ENCODE measurements at regions of chr19 and their contacts with region 1.

Region 1: DNA sequence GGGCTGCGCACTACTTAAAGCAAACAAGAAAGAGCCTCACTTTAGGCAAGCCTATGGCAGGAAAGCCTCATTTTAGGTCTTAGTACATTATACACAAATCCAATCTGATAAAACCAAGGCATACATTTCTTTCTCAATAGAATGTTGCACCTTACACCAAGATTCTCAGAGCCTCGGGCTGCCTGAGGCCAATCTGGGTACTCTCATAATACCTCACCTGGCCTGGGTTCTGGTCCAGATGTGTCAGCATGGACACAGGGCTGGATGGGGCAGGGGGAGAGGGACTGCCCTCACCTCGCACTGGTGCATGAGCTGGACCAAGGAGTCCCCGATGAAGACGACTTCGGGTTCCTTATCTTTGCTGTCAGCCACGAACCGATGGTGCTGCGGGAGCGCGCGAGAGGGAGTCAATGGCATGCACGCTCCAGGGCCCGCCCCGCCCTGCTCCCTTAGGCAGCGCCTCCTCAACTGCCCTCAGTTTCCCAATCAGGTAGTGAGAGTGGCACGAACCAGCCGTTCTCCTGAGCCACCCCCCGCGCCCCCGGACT is at the start of gene PRR19:
- DNase-seq: peak; percentile 50
- ATAC-seq: peak; percentile 25
- H3K4me3 Mint-ChIP-seq: peak within 1 kb of the TSS; percentile 83
- H3K27ac Mint-ChIP-seq: peak within 1 kb of the TSS; percentile 85
- H3K4me1 Mint-ChIP-seq: peaks cover 19% of the 10 kb centered on the region
- H3K27me3 Mint-ChIP-seq: no peaks in the 10 kb centered on the region
- total RNA-seq, gene PRR19: 0.63 to 1.0 TPM

Region 2: GRCh38 chr19:42053037-42053935 is 248.4 kb before region 1 on chr19:
- CTCF ChIA-PET with region 1: no interaction called
- POLR2A ChIA-PET with region 1: no interaction called
- intact Hi-C with region 1: no loop called
- DNase-seq: no peak
- ATAC-seq: no peak
- H3K4me3 Mint-ChIP-seq: no peak overlapping the region
- H3K27ac Mint-ChIP-seq: no peak overlapping the region
- H3K4me1 Mint-ChIP-seq: peaks cover 21% of the 10 kb centered on the region
- H3K27me3 Mint-ChIP-seq: no peaks in the 10 kb centered on the region

Region 3: GRCh38 chr19:42229855-42230351 is 71.8 kb before region 1 on chr19:
- CTCF ChIA-PET with region 1: no interaction called
- POLR2A ChIA-PET with region 1: no interaction called
- intact Hi-C with region 1: no loop called
- DNase-seq: no peak
- ATAC-seq: no peak
- H3K4me3 Mint-ChIP-seq: no peak overlapping the region
- H3K27ac Mint-ChIP-seq: peak overlapping the region; percentile 75
- H3K4me1 Mint-ChIP-seq: peaks cover 19% of the 10 kb centered on the region
- H3K27me3 Mint-ChIP-seq: no peaks in the 10 kb centered on the region

Region 4: DNA sequence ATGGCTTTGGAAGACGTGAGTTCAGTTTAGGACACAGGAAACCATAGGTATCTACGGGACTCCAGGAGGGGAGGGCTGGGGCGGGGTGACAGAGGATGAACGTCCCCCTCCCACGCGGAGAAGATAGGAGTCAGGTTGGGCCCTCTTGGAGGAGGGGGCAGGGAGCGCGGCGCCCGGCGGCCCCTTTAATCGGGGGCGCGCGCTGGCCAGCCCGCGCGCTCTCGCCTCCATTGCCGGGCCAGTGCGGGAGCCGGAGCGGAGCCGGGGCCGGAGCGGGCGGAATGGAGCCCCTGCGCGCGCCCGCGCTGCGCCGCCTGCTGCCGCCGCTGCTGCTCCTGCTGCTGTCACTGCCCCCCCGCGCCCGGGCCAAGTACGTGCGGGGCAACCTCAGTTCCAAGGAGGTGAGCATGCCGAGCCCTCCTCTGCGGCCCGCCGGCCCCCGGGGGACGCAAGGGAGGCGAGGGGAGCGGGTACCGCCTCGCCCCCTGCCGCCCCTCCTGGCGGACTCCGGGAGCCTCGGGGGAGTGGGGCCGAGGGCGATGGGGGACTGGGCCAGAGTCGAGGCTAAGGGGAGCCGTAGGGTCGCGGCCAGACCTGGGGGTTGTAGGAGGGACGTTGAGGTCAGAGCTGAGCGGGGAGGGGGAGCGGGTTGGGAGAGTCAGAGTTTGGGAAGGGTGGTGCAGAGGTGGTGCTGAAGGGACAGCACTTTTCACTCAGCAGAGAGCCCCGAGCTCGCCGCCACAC is 11.5 kb after region 1 on chr19 and contains the start of gene TMEM145:
- CTCF ChIA-PET with region 1: interaction called, 3 read pairs
- POLR2A ChIA-PET with region 1: interaction called, 3 read pairs
- intact Hi-C with region 1: loop called in 1 of 2 experiments (anchors 1 kb)
- DNase-seq: peak; percentile 75
- ATAC-seq: peak; percentile 75
- H3K4me3 Mint-ChIP-seq: peak within 1 kb of the TSS; percentile 47
- H3K27ac Mint-ChIP-seq: no peak within 1 kb of the TSS
- H3K4me1 Mint-ChIP-seq: peaks cover 13% of the 10 kb centered on the region
- H3K27me3 Mint-ChIP-seq: peaks cover 30% of the 10 kb centered on the region
- total RNA-seq, gene TMEM145: 0.53 to 0.69 TPM

Region 5: GRCh38 chr19:42378225-42379215 is 76.8 kb after region 1 on chr19:
- CTCF ChIA-PET with region 1: no interaction called
- POLR2A ChIA-PET with region 1: no interaction called
- intact Hi-C with region 1: no loop called
- DNase-seq: no peak
- ATAC-seq: peak; percentile 30
- H3K4me3 Mint-ChIP-seq: no peak overlapping the region
- H3K27ac Mint-ChIP-seq: no peak overlapping the region
- H3K4me1 Mint-ChIP-seq: peaks cover 3% of the 10 kb centered on the region
- H3K27me3 Mint-ChIP-seq: peaks cover 17% of the 10 kb centered on the region

Region 6: DNA sequence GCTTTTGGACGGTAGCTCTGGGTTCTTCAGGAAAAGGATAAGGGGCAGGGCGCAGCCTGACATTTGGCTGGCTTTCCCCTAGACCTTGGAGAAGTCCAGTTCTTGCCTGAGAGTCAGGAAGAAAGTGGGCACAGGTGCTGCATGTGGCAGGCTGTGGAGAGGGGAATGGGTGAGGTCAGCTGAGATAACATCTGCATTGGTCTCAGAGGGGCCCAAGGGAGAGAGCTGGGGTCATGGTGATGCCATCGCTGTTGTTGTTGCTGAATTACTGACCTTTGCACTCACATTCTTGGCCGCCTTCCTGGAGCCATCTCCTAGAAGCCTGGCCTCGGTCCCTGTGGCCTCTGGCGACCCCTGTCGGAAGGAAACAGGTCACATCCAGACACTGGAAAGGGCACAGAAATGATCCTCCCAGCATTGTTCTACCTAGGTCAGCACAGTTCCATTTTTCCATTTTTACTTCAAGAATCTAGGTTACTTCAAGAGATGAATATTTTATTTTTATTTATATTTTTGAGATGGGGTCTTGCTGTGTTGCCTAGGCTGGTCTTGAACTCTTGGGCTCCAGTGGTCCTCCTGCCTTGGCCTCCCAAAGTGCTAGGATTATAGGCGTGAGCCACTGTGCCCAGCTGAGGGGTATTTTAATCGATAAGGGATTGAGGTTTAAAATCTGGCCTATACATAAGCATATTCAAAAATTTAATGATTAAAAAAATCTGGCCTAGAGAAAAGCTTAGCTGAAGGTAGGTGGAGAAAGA is 132.0 kb after region 1 on chr19:
- CTCF ChIA-PET with region 1: no interaction called
- POLR2A ChIA-PET with region 1: no interaction called
- intact Hi-C with region 1: no loop called
- DNase-seq: peak; percentile 84
- ATAC-seq: peak; percentile 79
- H3K4me3 Mint-ChIP-seq: no peak overlapping the region
- H3K27ac Mint-ChIP-seq: no peak overlapping the region
- H3K4me1 Mint-ChIP-seq: peaks cover 5% of the 10 kb centered on the region
- H3K27me3 Mint-ChIP-seq: no peaks in the 10 kb centered on the region

Measured in activated CD4-positive, alpha-beta T cell treated with anti-CD3 and anti-CD28 coated beads for 36 hours (primary cell).